AG04449 (cell line): ENCODE measurements at regions of chrX and their contacts with region 1.

Region 1: DNA sequence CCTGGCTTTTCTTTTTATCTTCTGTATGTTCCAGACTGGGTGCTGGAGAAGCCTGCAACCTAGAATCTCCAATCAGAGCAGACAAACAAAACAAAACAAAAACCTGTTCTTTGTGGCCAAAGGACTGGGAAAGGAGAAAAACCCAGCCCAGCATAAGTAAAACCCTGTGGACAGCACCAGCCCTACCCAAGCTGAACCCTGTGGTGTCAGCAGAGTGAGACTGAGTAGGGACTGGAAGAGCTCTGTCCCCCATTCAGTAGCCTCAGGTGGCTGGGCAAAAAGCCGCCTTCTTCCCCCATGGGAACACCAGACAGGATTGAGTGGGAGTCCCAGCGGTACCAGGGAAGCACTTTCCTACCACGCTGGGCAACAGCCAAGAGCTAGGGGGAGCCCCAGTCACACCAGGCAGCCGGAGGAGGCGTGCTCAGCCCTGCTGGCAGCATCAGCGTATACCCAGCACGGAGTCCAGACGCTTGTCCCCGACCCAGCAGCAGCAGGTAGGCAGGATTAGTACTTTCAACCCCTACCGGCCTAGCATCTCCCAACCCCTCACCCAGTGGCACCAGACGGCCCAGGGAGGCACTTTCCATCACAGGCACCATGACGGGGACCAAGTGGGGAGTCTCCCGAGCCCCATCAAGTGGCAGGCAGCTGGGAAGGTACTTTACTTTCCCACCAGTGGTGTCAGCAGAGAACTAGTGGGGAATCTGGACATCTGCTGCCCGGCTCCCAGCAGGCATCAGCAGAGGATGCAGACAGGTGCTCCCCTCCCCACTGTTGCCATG is 8.6 kb upstream of the JADE3 start:
- DNase-seq: no peak
- H3K4me3 ChIP-seq: peak overlapping the region; percentile 69
- CTCF ChIP-seq: peak; percentile 83

Region 2: GRCh38 chrX:46770817-46771163 is 132.9 kb before region 1 on chrX:
- CTCF ChIA-PET with region 1: no interaction called
- POLR2A ChIA-PET with region 1: no interaction called
- DNase-seq: peak; percentile 75
- H3K4me3 ChIP-seq: peak overlapping the region; percentile 3
- CTCF ChIP-seq: no peak

Region 3: DNA sequence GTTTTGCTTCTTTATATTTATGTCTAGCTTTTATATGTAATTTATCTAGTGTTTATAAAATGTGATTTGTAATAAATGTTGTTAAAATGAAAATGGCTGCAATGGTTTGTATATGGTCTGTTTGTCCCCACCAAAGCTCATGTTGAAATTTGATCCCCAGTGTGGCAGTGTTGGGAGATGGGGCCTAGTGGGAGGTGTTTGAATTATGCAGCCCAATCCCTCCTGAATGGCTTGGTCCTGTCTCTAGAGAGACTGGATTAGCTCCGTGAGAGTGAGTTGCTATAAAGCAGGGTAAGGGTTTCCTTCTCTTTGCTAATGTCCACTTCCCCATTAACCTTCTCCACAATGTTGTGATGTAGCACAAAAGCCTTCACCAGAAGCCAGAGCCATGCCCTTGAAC is 21.4 kb before region 1 on chrX:
- CTCF ChIA-PET with region 1: interaction called, 13 read pairs
- POLR2A ChIA-PET with region 1: no interaction called
- DNase-seq: no peak
- H3K4me3 ChIP-seq: no peak overlapping the region
- CTCF ChIP-seq: no peak

Region 4: GRCh38 chrX:47030339-47030738 is 126.7 kb after region 1 on chrX:
- CTCF ChIA-PET with region 1: interaction called, 22 read pairs
- POLR2A ChIA-PET with region 1: no interaction called
- DNase-seq: peak; percentile 19
- H3K4me3 ChIP-seq: no peak overlapping the region
- CTCF ChIP-seq: peak; percentile 27

Region 5: GRCh38 chrX:47093248-47093647 is 189.6 kb after region 1 on chrX:
- CTCF ChIA-PET with region 1: interaction called, 22 read pairs
- POLR2A ChIA-PET with region 1: no interaction called
- DNase-seq: no peak
- H3K4me3 ChIP-seq: no peak overlapping the region
- CTCF ChIP-seq: peak; percentile 19